Activated CD8-positive, alpha-beta memory T cell treated with anti-CD3 and anti-CD28 coated beads, Interleukin-2, amount 10 ng/mL, durations not matched to agents 7 days and 5 days (primary cell): ENCODE measurements at regions of chr7 and their contacts with region 1.

Region 1: DNA sequence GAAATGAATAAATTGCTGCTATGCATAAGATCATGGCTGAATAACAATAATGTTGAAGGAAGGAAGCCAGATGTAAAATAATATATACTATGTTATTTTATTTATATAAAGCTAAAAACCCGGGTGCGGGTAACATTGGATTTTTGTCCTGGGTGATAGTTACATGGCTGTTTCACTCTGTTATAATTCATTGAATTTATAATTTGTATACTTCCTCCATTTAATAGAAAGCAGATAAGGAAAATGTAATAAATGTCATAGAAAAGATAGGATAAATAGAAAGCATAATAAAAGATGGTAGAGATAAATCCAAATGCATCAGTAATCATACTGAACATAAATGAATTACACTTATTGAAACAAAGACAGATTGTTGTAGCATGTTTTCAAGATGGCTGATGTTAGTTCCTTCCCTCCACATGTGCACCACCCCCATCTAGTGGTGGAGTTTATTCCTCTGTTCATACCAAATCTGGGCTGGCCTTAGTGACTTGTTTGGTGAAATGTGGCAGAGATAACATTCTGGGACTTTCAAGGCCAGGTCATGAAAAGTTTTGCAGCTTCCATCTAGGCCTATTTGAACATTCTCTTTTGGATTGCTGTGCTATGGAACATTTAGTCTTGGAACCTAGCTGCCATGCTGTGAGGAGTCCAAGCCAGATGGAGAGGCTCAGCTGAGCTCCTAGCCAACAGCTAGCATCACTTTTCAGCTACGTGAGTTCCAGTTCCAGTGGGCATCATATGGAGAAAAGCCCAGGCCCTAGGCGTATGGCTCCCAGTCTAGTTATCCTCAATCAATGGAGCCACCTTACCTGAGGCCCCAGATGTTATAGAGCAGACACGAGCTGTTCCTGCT is 46.9 kb downstream of the AHCYL2 start:
- DNase-seq: peak; percentile 78
- ATAC-seq: peak; percentile 99
- H3K4me3 Mint-ChIP-seq: no peak overlapping the region
- H3K27ac Mint-ChIP-seq: no peak overlapping the region
- H3K4me1 Mint-ChIP-seq: peaks cover 5% of the 10 kb centered on the region
- H3K27me3 Mint-ChIP-seq: no peaks in the 10 kb centered on the region

Region 2: DNA sequence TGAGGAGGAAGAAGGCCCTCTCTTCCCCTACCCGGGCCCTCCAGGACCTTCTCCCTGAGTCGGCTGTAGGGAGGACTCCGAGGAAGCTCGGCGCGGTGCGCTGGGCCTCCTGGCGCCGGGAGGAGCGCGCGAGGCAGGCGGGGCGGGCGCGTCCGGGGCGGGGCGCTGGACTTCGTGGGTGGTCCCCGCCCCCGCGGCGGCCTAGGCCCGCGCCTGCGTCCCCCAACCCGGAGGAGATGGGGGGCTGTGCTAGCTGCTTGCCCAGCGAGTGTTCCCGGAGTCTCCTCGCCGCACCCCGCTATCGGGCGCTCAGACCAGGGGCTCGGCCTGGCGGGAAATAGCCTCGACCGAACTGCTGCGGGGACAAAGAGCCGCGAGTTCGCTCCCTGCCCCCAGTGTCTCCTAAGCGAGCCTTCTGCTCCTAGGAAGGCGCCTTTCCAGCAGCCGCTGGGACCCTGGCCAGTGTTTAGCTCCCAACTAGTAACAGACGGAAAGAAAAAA is 102.5 kb before region 1 on chr7:
- CTCF ChIA-PET with region 1: no interaction called
- DNase-seq: peak; percentile 49
- ATAC-seq: peak; percentile 95
- H3K4me3 Mint-ChIP-seq: peak overlapping the region; percentile 64
- H3K27ac Mint-ChIP-seq: peak overlapping the region; percentile 25
- H3K4me1 Mint-ChIP-seq: peaks cover 15% of the 10 kb centered on the region
- H3K27me3 Mint-ChIP-seq: peaks cover 28% of the 10 kb centered on the region

Region 3: GRCh38 chr7:129224251-129225205 is 47.2 kb before region 1 on chr7 and contains the start of gene AHCYL2:
- CTCF ChIA-PET with region 1: interaction called, 232 read pairs
- DNase-seq: peak; percentile 98
- ATAC-seq: peak; percentile 94
- H3K4me3 Mint-ChIP-seq: peak within 1 kb of the TSS; percentile 88
- H3K27ac Mint-ChIP-seq: peak within 1 kb of the TSS; percentile 90
- H3K4me1 Mint-ChIP-seq: peaks cover 30% of the 10 kb centered on the region
- H3K27me3 Mint-ChIP-seq: no peaks in the 10 kb centered on the region
- total RNA-seq, gene AHCYL2: 12.7 to 12.8 TPM

Region 4: GRCh38 chr7:129258649-129259389 is 12.9 kb before region 1 on chr7:
- CTCF ChIA-PET with region 1: interaction called, 23 read pairs
- DNase-seq: no peak
- ATAC-seq: no peak
- H3K4me3 Mint-ChIP-seq: no peak overlapping the region
- H3K27ac Mint-ChIP-seq: peak overlapping the region; percentile 43
- H3K4me1 Mint-ChIP-seq: peaks cover 20% of the 10 kb centered on the region
- H3K27me3 Mint-ChIP-seq: no peaks in the 10 kb centered on the region